A549 (cell line): ENCODE measurements at regions of chr3 and their contacts with region 1.

Region 1: GRCh38 chr3:137998121-137999042 is 11.6 kb upstream of the CLDN18 start:
- DNase-seq: no peak
- ATAC-seq: no peak
- H3K4me3 ChIP-seq: no peak overlapping the region
- H3K27ac ChIP-seq: no peak overlapping the region
- H3K4me1 ChIP-seq: no peaks in the 10 kb centered on the region
- CTCF ChIP-seq: no peak
- EP300 ChIP-seq: no peak
- POLR2A ChIP-seq: no peak
- RAD21 ChIP-seq: no peak

Region 2: DNA sequence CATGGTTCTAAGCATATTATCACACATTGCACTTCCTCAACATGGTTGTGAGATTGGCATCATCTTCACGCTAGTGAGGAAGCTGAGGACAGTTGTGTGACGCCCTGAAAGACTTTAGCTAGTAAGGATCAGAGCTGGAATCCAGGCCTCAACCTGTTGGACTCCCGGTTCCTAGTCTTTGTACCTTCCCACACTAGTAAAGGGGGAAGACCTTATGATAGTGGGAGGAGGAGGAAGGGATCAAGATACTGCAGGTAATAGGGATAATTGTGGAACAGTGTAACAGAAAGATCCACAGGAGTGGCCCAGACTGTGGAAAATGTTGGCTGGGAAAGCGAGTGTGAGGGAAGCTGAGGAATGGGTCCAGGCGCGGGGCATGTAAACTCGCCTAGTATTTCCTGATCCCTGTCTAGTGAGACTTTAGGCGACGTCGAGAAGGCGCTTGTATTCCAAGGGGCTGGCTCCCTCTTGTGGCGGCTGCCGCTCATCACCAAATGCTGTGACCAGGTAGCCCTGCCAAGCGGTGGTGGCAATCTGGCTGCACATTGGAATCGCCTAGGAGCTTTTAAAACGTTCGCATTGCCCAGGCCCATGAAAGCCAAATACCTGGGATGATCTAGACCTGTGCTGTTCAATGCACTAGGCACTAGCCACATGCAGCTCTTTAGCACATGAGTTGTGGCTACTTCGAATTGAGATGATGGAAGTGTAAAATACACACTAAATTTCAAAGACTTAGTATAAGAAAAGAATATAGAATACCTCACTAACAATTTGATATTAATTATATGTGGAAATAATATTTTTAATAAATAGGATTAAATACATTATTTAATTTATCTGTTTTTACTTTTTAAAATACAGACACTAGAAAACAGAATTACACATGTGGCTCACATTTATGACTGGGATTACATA is 27.2 kb before region 1 on chr3:
- CTCF ChIA-PET with region 1: interaction called, 10 read pairs
- POLR2A ChIA-PET with region 1: no interaction called
- DNase-seq: peak; percentile 50 to 67
- ATAC-seq: peak; percentile 100
- H3K4me3 ChIP-seq: no peak overlapping the region
- H3K27ac ChIP-seq: no peak overlapping the region
- H3K4me1 ChIP-seq: no peaks in the 10 kb centered on the region
- CTCF ChIP-seq: peak; percentile 64
- EP300 ChIP-seq: no peak
- POLR2A ChIP-seq: no peak
- RAD21 ChIP-seq: peak; percentile 69 to 76